Heart left ventricle (tissue), 16 donors: ENCODE measurements at regions of chr1 and their contacts with region 1.

Region 1: DNA sequence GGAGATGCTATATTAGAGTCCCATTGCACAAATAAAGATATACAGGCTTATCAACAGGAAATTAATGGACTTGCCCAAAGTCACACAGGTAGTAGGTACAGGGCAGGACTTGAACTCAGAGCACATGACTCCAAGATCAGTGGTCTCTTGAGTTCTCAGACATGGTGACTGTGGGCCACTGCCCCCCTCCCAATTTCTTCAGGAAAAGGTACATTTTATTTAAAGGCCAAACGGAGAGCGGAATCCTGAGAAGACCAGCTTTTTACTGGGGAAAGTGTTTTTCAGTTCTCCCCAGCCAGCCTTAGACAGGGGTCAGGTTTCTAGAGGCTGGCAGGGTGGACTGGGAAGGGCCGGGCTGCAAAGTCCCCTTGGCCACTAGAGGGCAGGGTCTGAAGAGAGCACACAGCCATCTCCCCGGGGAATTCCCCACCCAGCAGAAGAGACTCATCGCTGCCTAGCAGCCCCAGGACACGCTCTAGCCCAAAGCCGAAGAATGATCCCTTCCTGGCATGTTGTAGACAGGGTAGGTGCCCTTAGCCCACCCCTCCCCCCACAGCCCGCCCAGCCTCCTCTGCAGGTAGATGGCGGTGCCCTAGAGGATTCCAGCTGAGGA is 29.7 kb downstream of the ACP6 start:
- DNase-seq: peak; percentile 63 to 77 (median 73)
- ATAC-seq: peak; percentile 85 to 96 (median 94)
- H3K4me3 ChIP-seq: peak overlapping the region in 1 of 12 donors; percentile 18
- H3K27ac ChIP-seq: no peak overlapping the region
- H3K4me1 ChIP-seq: peaks cover 0 to 23% (median 6%) of the 10 kb centered on the region in 12 donors
- H3K27me3 ChIP-seq: no peaks in the 10 kb centered on the region
- CTCF ChIP-seq: peak; percentile 66 to 87 (median 74)
- POLR2A ChIP-seq: no peak

Region 2: DNA sequence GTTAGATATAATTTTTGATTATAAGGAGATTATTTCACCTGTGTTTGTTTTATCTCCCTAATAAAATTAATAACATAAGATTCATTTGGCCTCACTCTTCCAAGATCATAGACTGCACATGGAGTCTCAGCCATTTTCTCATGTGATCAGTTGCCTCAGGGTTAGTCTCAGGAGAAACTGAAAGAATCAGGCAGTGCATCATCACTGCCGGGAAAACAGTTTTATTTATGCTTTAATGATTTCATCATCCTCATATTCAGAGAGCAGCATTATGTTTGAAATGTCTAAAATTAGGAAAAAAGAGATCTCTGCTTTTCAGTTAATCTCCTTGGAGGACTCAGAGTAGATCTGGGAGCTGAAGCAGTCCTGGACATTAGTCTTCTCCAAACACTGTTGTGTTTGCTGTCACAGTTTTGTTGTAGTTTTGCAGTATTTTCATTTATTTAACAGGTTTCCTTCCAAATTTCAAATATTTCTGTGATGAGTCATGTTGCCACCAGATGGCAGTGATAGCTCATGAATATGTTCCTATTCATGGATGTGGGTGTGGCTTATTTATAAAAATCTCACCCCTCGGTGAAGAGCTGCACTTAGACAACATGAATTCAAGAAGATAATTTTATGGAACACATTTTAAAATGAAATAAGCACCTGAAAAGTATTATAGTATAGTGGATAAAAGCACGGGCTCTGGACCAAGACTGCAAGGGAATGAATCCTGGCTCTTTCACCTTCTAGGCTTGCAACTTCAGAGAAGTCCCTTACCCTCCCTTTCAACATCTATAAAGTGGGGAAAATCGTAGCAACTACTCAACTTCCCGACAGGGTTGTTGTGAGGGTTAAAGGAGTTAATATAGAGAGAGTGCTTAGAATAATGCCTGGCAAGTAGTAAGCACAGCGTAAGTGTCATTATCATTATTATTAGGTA is 367.0 kb before region 1 on chr1:
- intact Hi-C with region 1: loop called in 4 of 10 experiments (anchors 5 to 10 kb)
- DNase-seq: peak in 2 of 5 donors; percentile 22 to 30
- ATAC-seq: peak in 3 of 4 donors; percentile 66 to 89 (median 80)
- H3K4me3 ChIP-seq: no peak overlapping the region
- H3K27ac ChIP-seq: peak overlapping the region in 6 of 12 donors; percentile 2 to 61 (median 18)
- H3K4me1 ChIP-seq: peaks cover 0 to 16% (median 6%) of the 10 kb centered on the region in 12 donors
- H3K27me3 ChIP-seq: no peaks in the 10 kb centered on the region
- CTCF ChIP-seq: peak; percentile 29 to 73 (median 51)
- POLR2A ChIP-seq: no peak

Region 3: GRCh38 chr1:147509786-147510395 is 130.8 kb before region 1 on chr1:
- intact Hi-C with region 1: loop called in 1 of 10 experiments (anchors 5 kb)
- DNase-seq: peak in 3 of 5 donors; percentile 45 to 57 (median 54)
- ATAC-seq: peak; percentile 84 to 92 (median 90)
- H3K4me3 ChIP-seq: peak overlapping the region in 3 of 12 donors; percentile 2 to 4 (median 3)
- H3K27ac ChIP-seq: peak overlapping the region in 10 of 12 donors; percentile 9 to 84 (median 58)
- H3K4me1 ChIP-seq: peaks cover 0 to 36% (median 10%) of the 10 kb centered on the region in 12 donors
- H3K27me3 ChIP-seq: no peaks in the 10 kb centered on the region
- CTCF ChIP-seq: no peak
- POLR2A ChIP-seq: no peak

Region 4: GRCh38 chr1:147527941-147528936 is 112.4 kb before region 1 on chr1:
- intact Hi-C with region 1: no loop called
- DNase-seq: no peak
- ATAC-seq: no peak
- H3K4me3 ChIP-seq: no peak overlapping the region
- H3K27ac ChIP-seq: no peak overlapping the region
- H3K4me1 ChIP-seq: no peaks in the 10 kb centered on the region
- H3K27me3 ChIP-seq: no peaks in the 10 kb centered on the region
- CTCF ChIP-seq: no peak
- POLR2A ChIP-seq: no peak

Region 5: GRCh38 chr1:147549526-147549925 is 91.1 kb before region 1 on chr1:
- intact Hi-C with region 1: no loop called
- DNase-seq: no peak
- ATAC-seq: no peak
- H3K4me3 ChIP-seq: no peak overlapping the region
- H3K27ac ChIP-seq: peak overlapping the region in 2 of 12 donors; percentile 15 to 37
- H3K4me1 ChIP-seq: peaks cover 0 to 36% (median 9%) of the 10 kb centered on the region in 12 donors
- H3K27me3 ChIP-seq: no peaks in the 10 kb centered on the region
- CTCF ChIP-seq: no peak
- POLR2A ChIP-seq: no peak

Region 6: GRCh38 chr1:147599362-147600118 is 41.1 kb before region 1 on chr1:
- intact Hi-C with region 1: loop called in 1 of 10 experiments (anchors 5 kb)
- DNase-seq: peak; percentile 98 to 99 (median 98)
- ATAC-seq: peak; percentile 89 to 96 (median 95)
- H3K4me3 ChIP-seq: peak overlapping the region; percentile 62 to 99 (median 78)
- H3K27ac ChIP-seq: peak overlapping the region; percentile 62 to 97 (median 90)
- H3K4me1 ChIP-seq: peaks cover 0 to 34% (median 16%) of the 10 kb centered on the region in 12 donors
- H3K27me3 ChIP-seq: no peaks in the 10 kb centered on the region
- CTCF ChIP-seq: no peak
- POLR2A ChIP-seq: peak; percentile 91 to 98

Region 7: DNA sequence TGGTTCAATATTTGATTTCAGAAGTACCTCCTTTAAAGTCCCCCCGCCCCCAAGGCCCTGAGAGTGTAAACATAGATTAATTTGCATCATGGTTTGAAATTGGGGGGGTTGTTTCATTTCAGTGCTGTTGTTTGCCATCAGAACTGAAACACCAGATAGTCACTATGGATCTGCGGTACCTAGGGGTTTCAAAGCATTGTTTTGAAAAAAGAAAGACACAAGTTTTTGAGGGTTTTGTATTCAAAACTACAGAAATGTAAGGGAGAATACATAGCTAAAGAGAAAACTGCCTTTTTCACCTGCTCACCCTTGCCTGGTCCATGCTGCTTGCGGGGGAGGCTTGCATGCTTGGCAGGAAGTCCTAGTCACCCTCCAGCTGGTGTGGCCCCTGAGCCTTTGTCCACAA is 29.6 kb before region 1 on chr1:
- intact Hi-C with region 1: no loop called
- DNase-seq: no peak
- ATAC-seq: no peak
- H3K4me3 ChIP-seq: no peak overlapping the region
- H3K27ac ChIP-seq: no peak overlapping the region
- H3K4me1 ChIP-seq: peaks cover 0 to 34% (median 10%) of the 10 kb centered on the region in 12 donors
- H3K27me3 ChIP-seq: no peaks in the 10 kb centered on the region
- CTCF ChIP-seq: no peak
- POLR2A ChIP-seq: no peak